B cell (primary cell): ENCODE measurements at regions of chr1 and their contacts with region 1.

Region 1: DNA sequence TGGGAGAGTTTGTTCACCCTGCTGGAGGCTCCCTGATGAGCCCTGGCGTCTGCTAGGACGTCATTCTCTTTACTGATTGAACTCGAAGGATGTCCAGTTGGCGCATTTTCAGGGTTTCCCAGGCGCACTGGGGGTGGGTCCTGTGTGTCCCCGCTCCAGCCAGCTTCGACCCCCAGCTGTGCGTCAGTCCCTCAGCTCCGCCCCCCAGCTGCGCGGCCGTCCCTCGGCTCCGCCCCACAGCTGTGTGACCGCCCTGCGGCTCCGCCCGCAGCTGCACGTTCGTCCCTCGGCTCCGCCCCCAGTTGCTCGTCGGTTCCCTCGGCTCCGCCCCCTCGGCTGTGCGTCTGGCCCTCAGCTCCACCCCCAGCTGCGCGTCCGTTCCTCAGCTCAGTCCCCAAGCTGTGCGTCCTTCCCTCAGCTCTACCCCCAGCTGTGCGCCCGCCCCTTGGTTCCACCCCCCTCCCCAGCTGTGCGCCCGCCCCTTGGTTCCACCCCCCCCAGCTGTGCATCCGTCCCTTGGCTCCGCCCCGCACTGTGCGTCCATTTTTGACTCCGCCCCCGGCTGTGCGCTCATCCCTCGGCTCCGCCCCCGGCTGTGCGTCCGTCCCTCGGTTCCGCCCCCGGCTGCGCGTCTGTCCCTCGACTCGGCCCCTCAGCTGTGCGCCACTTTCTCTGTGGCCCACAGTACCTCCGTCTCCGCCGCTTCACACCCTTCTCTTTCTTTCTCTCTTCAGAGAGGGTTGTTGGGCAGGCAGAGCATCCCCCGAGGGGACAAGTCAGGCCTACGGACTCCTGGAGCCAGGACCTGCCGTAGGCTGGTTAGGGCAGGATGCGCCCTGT is 61.3 kb downstream of the FAAP20 start:
- DNase-seq: peak; percentile 98
- ATAC-seq: peak; percentile 91
- H3K4me3 ChIP-seq: peak overlapping the region; percentile 16 to 64 (median 56)
- H3K4me3 Mint-ChIP-seq: peak overlapping the region; percentile 88
- H3K27ac ChIP-seq: peak overlapping the region; percentile 80 to 82
- H3K27ac Mint-ChIP-seq: peak overlapping the region; percentile 91
- H3K4me1 ChIP-seq: peaks cover 10 to 19% of the 10 kb centered on the region in 2 donors
- H3K4me1 Mint-ChIP-seq: peaks cover 23% of the 10 kb centered on the region
- H3K27me3 ChIP-seq: no peaks in the 10 kb centered on the region
- H3K27me3 Mint-ChIP-seq: no peaks in the 10 kb centered on the region
- CTCF ChIP-seq: no peak

Region 2: GRCh38 chr1:2049718-2050427 is 83.4 kb before region 1 on chr1 and contains the start of gene PRKCZ:
- CTCF ChIA-PET with region 1: interaction called, 4 read pairs
- POLR2A ChIA-PET with region 1: no interaction called
- intact Hi-C with region 1: loop called (anchors 1 kb)
- DNase-seq: peak; percentile 95
- ATAC-seq: peak; percentile 97
- H3K4me3 ChIP-seq: peak within 1 kb of the TSS; percentile 12 to 90 (median 79)
- H3K4me3 Mint-ChIP-seq: peak within 1 kb of the TSS; percentile 81
- H3K27ac ChIP-seq: peak within 1 kb of the TSS; percentile 52 to 72
- H3K27ac Mint-ChIP-seq: peak within 1 kb of the TSS; percentile 75
- H3K4me1 ChIP-seq: peaks cover 22 to 33% of the 10 kb centered on the region in 2 donors
- H3K4me1 Mint-ChIP-seq: peaks cover 34% of the 10 kb centered on the region
- H3K27me3 ChIP-seq: peaks cover 0 to 36% (median 15%) of the 10 kb centered on the region in 4 experiments
- H3K27me3 Mint-ChIP-seq: peaks cover 9% of the 10 kb centered on the region
- CTCF ChIP-seq: no peak
- total RNA-seq, gene PRKCZ: 53.2 and 54.4 TPM in 2 replicates

Region 3: DNA sequence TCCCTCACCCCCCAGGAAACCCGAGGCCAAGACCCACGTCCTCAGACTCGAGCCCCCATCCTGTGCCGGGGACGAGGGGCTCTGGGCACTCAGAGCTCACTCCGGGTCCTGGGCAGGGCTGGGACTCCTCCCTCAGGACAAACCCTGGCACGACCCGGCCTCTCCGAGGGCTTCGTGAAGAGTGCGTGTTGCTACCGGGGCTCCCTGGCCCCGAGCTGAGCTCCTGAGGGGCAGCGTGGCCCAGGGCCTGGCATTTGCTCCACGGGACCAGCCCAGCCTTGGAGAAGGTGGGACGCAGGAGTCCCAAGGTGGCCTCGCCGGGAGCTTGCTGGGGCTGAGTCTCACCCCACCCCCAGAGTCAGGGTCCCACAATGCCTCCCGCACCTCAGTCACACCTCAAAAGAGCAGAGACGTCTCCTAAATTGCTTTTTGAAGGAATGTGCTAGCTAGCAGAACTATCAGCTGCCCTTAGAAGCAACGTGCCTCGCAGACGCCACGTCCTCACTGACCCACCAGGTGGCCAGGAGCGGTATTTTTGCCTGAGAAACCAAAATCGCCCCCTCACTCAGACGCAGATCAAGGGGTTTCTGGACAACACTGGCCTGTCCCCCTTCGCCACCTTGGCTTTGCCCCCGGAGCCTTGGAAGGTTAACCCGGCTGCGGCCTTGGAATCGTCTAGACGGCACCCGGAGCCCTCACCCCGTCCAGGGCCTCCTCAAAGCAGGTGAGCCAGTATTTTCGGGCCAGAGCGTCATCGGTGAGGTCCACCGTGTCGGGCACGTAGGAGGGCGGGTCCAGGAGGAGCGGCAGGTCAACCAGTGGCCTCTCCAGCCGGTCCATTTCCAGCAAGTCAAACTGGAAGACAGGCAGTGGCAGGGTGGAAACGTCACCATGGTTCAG is 381.9 kb after region 1 on chr1:
- CTCF ChIA-PET with region 1: no interaction called
- POLR2A ChIA-PET with region 1: no interaction called
- intact Hi-C with region 1: no loop called
- DNase-seq: no peak
- ATAC-seq: no peak
- H3K4me3 ChIP-seq: no peak overlapping the region
- H3K4me3 Mint-ChIP-seq: no peak overlapping the region
- H3K27ac ChIP-seq: no peak overlapping the region
- H3K27ac Mint-ChIP-seq: no peak overlapping the region
- H3K4me1 ChIP-seq: no peaks in the 10 kb centered on the region
- H3K4me1 Mint-ChIP-seq: no peaks in the 10 kb centered on the region
- H3K27me3 ChIP-seq: no peaks in the 10 kb centered on the region
- H3K27me3 Mint-ChIP-seq: no peaks in the 10 kb centered on the region
- CTCF ChIP-seq: no peak